ENCODE measurements at regions of chr6 and their contacts with region 1.

Region 1: GRCh38 chr6:105484238-105485161 is 81.6 kb upstream of the PREP start:
- DNase-seq: no peak
- H3K4me3 ChIP-seq: no peak overlapping the region
- H3K27ac ChIP-seq: no peak overlapping the region
- H3K4me1 ChIP-seq: no peaks in the 10 kb centered on the region
- H3K27me3 ChIP-seq: no peaks in the 10 kb centered on the region
- CTCF ChIP-seq: peak; percentile 83

Region 2: GRCh38 chr6:105384008-105384407 is 100.5 kb before region 1 on chr6:
- intact Hi-C with region 1: no loop called
- DNase-seq: peak; percentile 68
- H3K4me3 ChIP-seq: no peak overlapping the region
- H3K27ac ChIP-seq: no peak overlapping the region
- H3K4me1 ChIP-seq: peaks cover 18% of the 10 kb centered on the region
- H3K27me3 ChIP-seq: no peaks in the 10 kb centered on the region
- CTCF ChIP-seq: no peak

Region 3: GRCh38 chr6:105733565-105734162 is 249.2 kb after region 1 on chr6:
- intact Hi-C with region 1: loop called (anchors 10 kb)
- DNase-seq: no peak
- H3K4me3 ChIP-seq: no peak overlapping the region
- H3K27ac ChIP-seq: no peak overlapping the region
- H3K4me1 ChIP-seq: no peaks in the 10 kb centered on the region
- H3K27me3 ChIP-seq: no peaks in the 10 kb centered on the region
- CTCF ChIP-seq: peak; percentile 62

Region 4: GRCh38 chr6:106085984-106086813 is 601.7 kb after region 1 on chr6 and contains the start of gene PRDM1:
- intact Hi-C with region 1: loop called (anchors 10 kb)
- DNase-seq: peak; percentile 92
- H3K4me3 ChIP-seq: peak within 1 kb of the TSS; percentile 41
- H3K27ac ChIP-seq: peak within 1 kb of the TSS; percentile 60
- H3K4me1 ChIP-seq: peaks cover 5% of the 10 kb centered on the region
- H3K27me3 ChIP-seq: no peaks in the 10 kb centered on the region
- CTCF ChIP-seq: no peak
- total RNA-seq, gene PRDM1: 7.2 to 17.6 TPM

Region 5: GRCh38 chr6:106290954-106291353 is 806.5 kb after region 1 on chr6:
- intact Hi-C with region 1: loop called (anchors 10 kb)
- DNase-seq: no peak
- H3K4me3 ChIP-seq: no peak overlapping the region
- H3K27ac ChIP-seq: no peak overlapping the region
- H3K4me1 ChIP-seq: no peaks in the 10 kb centered on the region
- H3K27me3 ChIP-seq: no peaks in the 10 kb centered on the region
- CTCF ChIP-seq: no peak

Region 6: GRCh38 chr6:106560996-106561685 is 1076.6 kb after region 1 on chr6:
- intact Hi-C with region 1: loop called (anchors 10 kb)
- DNase-seq: no peak
- H3K4me3 ChIP-seq: no peak overlapping the region
- H3K27ac ChIP-seq: no peak overlapping the region
- H3K4me1 ChIP-seq: no peaks in the 10 kb centered on the region
- H3K27me3 ChIP-seq: no peaks in the 10 kb centered on the region
- CTCF ChIP-seq: no peak